Heart right ventricle (tissue), 16 donors: ENCODE measurements at regions of chr17 and their contacts with region 1.

Region 1: DNA sequence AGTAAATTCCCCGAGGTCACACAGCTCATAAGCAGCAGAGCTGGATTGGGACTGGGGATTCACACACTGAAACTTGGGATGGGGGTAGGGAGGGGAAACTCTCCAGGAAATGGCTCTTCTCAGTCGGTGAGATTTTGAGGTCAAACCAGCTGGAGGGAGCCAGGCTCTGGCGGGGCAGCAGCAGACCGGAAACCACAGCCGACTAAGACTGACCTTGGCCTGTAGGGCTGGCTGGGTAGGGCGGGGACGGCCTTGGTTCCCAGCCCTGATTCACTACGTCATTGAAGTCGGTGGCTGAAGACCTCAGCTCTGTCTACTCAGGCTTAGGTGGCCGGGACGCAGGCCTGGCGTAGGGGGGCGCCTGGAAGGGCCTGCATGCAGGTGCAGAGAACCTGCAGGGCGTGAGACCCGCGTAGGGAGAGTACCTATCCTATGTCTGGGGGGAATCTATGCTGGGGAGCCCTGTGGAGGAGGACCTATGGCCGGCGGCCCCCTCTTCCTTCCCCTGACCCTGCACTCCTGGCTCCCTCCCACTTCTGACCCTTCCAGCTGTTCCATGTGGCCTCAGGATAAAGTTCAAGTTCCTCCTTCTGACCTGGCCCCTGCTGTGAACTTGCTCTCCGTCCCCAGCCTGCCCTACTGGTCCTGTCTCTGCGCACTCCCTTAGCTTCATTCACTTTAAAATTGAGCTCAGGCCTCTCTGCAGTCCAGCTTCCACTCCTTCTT is 11.9 kb upstream of the SLC4A1 start:
- DNase-seq: peak; percentile 76 to 87
- ATAC-seq: peak; percentile 95 to 99 (median 97)
- H3K4me3 ChIP-seq: peak overlapping the region in 2 of 10 donors; percentile 9 to 24
- H3K27ac ChIP-seq: peak overlapping the region; percentile 39 to 91 (median 81)
- H3K4me1 ChIP-seq: peaks cover 5 to 23% (median 19%) of the 10 kb centered on the region in 9 donors
- H3K27me3 ChIP-seq: no peaks in the 10 kb centered on the region
- CTCF ChIP-seq: no peak

Region 2: GRCh38 chr17:44218344-44219107 is 61.3 kb before region 1 on chr17:
- intact Hi-C with region 1: loop called in 2 of 10 experiments (anchors 5 to 10 kb)
- DNase-seq: peak; percentile 89 to 92
- ATAC-seq: peak; percentile 71 to 84 (median 76)
- H3K4me3 ChIP-seq: peak overlapping the region; percentile 64 to 98 (median 92)
- H3K27ac ChIP-seq: peak overlapping the region; percentile 98 to 100 (median 100)
- H3K4me1 ChIP-seq: peaks cover 7 to 50% (median 38%) of the 10 kb centered on the region in 9 donors
- H3K27me3 ChIP-seq: no peaks in the 10 kb centered on the region
- CTCF ChIP-seq: peak; percentile 57 to 86 (median 70)

Region 3: GRCh38 chr17:44230140-44230539 is 49.7 kb before region 1 on chr17:
- intact Hi-C with region 1: loop called in 3 of 10 experiments (anchors 5 to 10 kb)
- DNase-seq: peak in 1 of 2 donors; percentile 38
- ATAC-seq: peak in 7 of 8 donors; percentile 21 to 76 (median 62)
- H3K4me3 ChIP-seq: no peak overlapping the region
- H3K27ac ChIP-seq: peak overlapping the region in 3 of 10 donors; percentile 5 to 31 (median 9)
- H3K4me1 ChIP-seq: peaks cover 0 to 18% (median 6%) of the 10 kb centered on the region in 9 donors
- H3K27me3 ChIP-seq: no peaks in the 10 kb centered on the region
- CTCF ChIP-seq: no peak

Region 4: DNA sequence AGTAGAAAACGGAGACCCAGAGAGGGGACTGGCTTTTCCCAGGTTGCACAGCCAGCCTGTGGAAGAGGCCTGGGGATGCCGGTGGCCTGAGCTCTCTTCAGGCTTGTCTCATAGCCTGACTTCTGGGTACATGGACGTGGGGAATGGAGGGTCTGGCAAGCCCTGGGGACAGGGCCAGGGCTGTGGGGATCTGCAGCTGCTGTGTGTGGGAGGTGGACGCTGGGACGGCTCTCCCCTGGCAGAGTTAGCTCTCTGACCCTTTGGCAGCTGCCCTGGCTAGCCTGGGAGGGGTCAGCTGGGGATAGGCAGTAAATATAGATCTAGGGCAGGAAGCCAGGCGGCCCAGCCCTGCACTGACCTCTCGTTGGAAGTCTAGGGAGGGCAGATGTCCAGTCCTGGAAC is 32.4 kb before region 1 on chr17:
- intact Hi-C with region 1: loop called in 1 of 10 experiments (anchors 2 kb)
- DNase-seq: peak; percentile 63 to 74
- ATAC-seq: peak; percentile 74 to 93 (median 84)
- H3K4me3 ChIP-seq: no peak overlapping the region
- H3K27ac ChIP-seq: peak overlapping the region in 6 of 10 donors; percentile 2 to 60 (median 40)
- H3K4me1 ChIP-seq: peaks cover 16 to 34% (median 28%) of the 10 kb centered on the region in 9 donors
- H3K27me3 ChIP-seq: no peaks in the 10 kb centered on the region
- CTCF ChIP-seq: no peak

Region 5: GRCh38 chr17:44324571-44325275 is 44.9 kb after region 1 on chr17 and contains the start of gene SLC25A39:
- intact Hi-C with region 1: loop called in 2 of 10 experiments (anchors 5 kb)
- DNase-seq: peak; percentile 94 to 97
- ATAC-seq: peak; percentile 88 to 93 (median 92)
- H3K4me3 ChIP-seq: peak within 1 kb of the TSS; percentile 90 to 100 (median 98)
- H3K27ac ChIP-seq: peak within 1 kb of the TSS; percentile 79 to 98 (median 94)
- H3K4me1 ChIP-seq: peaks cover 9 to 41% (median 35%) of the 10 kb centered on the region in 9 donors
- H3K27me3 ChIP-seq: no peaks in the 10 kb centered on the region
- CTCF ChIP-seq: no peak
- total RNA-seq, gene SLC25A39: 36.3 to 54.7 (median 43.1) TPM